HEK293 (cell line): ENCODE measurements at regions of chr1 and their contacts with region 1.

Region 1: DNA sequence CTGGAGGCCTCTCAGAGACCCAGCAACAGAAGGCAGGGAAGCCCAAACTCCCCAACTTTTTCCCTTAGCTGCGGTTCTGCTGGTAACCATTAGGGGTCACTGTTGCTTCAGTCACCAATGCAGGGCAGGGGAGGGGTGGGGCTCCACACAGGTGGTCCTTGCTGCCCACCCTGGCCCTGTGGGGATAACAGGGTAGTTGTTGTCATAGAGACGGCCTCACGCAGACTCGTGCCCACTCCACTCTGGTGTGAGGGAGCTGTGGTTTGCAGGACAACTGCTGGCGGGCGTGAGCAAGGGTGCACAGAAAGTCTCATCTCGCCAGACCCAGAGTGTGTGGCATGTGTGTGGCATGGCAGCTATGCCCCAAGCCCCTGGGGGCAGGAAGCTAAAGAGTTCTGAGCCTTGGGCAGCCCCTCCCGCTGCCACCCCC is 19.9 kb downstream of the INSRR start:
- H3K4me3 ChIP-seq: no peak overlapping the region
- H3K27ac ChIP-seq: no peak overlapping the region
- H3K4me1 ChIP-seq: no peaks in the 10 kb centered on the region
- CTCF ChIP-seq: peak; percentile 78; the same call in 1 of the 2 replicates

Region 2: GRCh38 chr1:156560585-156561183 is 278.3 kb before region 1 on chr1:
- CTCF ChIA-PET with region 1: no interaction called
- POLR2A ChIA-PET with region 1: no interaction called
- H3K4me3 ChIP-seq: no peak overlapping the region
- H3K27ac ChIP-seq: no peak overlapping the region
- H3K4me1 ChIP-seq: no peaks in the 10 kb centered on the region
- CTCF ChIP-seq: no peak

Region 3: DNA sequence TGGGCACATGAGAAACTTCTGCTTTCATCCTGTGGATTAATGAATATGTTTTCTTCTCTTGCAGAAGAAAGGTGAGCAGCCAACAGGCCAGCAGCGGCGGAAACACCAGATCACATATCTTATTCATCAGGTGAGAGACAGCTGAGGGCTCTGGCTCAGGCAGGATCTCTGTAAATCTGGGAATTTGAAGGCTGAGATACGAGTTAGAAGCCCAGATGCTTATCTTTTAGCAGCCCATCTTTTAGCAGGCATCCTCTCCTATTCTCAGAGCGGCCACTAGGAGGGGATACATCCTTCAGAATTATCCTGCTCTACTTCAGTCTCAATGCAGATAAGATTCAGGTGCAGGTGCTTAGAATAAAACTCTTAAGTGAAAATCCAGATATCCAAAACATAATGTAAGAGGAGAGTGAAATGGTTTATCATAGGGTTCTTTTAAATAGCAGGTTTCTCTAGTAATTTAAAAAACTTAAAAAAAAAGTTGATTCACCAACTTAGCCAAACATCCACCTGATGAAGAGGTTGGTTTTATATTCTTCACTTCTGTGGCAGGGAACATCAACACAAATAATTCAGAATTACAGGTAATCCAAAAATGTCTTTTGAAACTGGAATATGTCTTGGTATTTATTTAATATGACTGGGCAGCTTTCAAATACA is 41.7 kb before region 1 on chr1:
- CTCF ChIA-PET with region 1: interaction called, 26 read pairs
- POLR2A ChIA-PET with region 1: no interaction called
- H3K4me3 ChIP-seq: no peak overlapping the region
- H3K27ac ChIP-seq: no peak overlapping the region
- H3K4me1 ChIP-seq: no peaks in the 10 kb centered on the region
- CTCF ChIP-seq: 0 out of 2 replicates have a peak, but pooled peaks have one; percentile 47

Region 4: DNA sequence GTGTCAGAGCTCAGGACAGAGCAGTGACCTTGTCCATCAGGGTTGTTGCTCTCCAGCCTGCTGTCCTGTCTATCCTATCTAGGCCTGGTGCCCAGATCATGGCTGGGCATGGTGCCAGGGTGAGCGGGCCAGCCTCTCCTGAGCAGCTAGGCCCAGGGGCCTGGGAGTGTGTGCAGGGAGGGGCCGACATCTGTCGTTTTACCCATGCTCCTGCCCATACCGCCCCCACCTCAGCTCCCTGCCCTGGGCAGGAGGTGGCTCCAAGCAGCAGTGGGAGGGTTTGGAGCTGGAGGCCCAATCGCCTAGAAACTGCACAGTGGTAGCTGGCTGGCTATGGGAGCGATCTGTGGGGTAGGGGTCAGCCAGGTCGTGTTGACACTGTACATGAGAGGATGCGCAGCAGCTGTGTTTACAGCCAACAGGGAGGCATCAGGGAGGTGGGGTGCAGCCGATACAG is 13.4 kb after region 1 on chr1:
- CTCF ChIA-PET with region 1: interaction called, 119 read pairs
- POLR2A ChIA-PET with region 1: no interaction called
- H3K4me3 ChIP-seq: no peak overlapping the region
- H3K27ac ChIP-seq: no peak overlapping the region
- H3K4me1 ChIP-seq: no peaks in the 10 kb centered on the region
- CTCF ChIP-seq: no peak

Region 5: DNA sequence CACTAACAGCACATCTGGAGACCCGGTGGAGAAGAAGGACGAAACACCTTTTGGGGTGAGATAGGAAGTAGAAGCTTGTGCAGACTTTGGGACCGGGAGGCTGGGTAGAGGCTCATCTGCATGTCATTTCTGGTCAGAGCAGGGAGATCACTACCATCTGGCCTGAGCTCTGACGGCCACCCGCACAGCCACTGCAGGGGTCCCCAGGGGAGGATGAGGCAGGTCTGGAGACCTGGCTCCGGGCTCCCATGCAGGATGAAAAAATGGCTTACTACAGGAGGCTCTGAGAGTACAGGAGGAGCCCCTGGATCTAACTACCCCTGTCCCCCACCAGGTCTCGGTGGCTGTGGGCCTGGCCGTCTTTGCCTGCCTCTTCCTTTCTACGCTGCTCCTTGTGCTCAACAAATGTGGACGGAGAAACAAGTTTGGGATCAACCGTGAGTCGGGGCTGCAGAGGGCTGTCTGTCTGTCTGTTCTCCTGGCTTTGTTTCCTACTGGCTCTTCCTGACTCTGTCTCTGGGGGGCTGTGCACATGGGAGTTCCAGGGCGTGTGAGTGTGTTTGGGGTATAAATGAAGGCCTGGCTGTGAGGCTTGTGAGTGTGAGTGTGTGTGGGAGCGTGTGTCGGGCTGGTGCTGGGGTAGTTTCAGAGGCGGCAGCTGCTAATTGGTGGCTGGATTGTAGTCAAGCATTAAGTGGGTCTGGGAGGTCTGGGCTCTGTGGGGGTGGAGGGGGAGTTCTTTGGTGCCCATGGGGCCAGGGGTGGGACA is 35.8 kb after region 1 on chr1:
- CTCF ChIA-PET with region 1: interaction called, 12 read pairs
- POLR2A ChIA-PET with region 1: no interaction called
- H3K4me3 ChIP-seq: no peak overlapping the region
- H3K27ac ChIP-seq: no peak overlapping the region
- H3K4me1 ChIP-seq: no peaks in the 10 kb centered on the region
- CTCF ChIP-seq: no peak

Region 6: GRCh38 chr1:156927215-156928042 is 88.4 kb after region 1 on chr1:
- CTCF ChIA-PET with region 1: interaction called, 23 read pairs
- POLR2A ChIA-PET with region 1: no interaction called
- H3K4me3 ChIP-seq: peak overlapping the region; percentile 33
- H3K27ac ChIP-seq: no peak overlapping the region; the same call in 1 of the 2 replicates
- H3K4me1 ChIP-seq: no peaks in the 10 kb centered on the region; the same call in 1 of the 2 replicates
- CTCF ChIP-seq: peak; percentile 90